ENCODE measurements at regions of chr18 and their contacts with region 1.

Region 1: DNA sequence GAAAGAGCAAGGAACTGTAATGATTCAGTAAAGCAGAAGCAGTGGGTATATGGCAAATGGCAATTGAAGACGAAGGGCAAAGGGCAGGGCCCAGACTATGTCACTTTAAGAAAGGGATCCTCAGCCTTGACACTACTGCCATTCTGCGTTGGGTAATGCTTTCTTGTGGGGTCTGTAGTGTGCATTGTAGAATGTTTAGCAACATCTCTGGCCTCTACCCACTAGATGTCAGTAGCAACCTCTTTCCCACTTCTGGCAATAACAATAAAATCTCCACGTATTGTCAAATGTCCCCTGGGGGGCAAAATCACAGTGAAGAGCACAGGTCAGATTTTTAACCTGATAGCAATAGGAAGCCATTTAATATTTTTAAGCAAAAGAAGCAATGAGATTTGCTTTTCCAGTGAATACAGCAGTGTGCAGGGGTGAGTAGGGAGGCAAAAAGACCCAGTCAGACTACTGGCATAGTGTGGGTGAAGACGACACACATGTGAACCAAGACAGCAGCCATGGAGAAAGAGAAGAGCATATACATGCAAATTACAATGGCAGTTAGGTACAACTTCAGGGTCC is 209.5 kb downstream of the DYM start:
- DNase-seq: peak; percentile 4
- H3K4me3 Mint-ChIP-seq: no peak overlapping the region
- H3K27ac Mint-ChIP-seq: no peak overlapping the region
- H3K4me1 Mint-ChIP-seq: peaks cover 7% of the 10 kb centered on the region
- H3K27me3 Mint-ChIP-seq: no peaks in the 10 kb centered on the region
- CTCF ChIP-seq: no peak

Region 2: DNA sequence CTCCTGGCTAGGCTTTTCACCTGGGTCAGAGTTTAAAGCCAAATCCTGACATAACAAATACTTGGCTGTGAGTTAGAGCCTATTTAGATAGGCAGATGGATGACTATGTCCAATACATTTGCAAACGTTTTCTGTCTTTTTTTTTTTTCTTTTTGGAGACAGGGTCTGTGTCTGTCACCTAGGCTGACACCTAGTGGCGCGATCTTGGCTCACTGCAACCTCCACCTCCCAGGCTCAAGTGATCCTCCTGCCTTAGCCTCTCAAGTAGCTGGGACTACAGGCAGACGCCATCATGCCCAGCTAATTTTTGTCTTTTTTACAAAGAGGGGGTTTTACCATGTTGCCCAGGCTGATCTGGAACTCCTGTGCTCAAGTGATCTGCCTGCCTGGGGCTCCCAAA is 84.8 kb after region 1 on chr18:
- CTCF ChIA-PET with region 1: no interaction called
- intact Hi-C with region 1: loop called (anchors 2 kb)
- DNase-seq: peak; percentile 50
- H3K4me3 Mint-ChIP-seq: no peak overlapping the region
- H3K27ac Mint-ChIP-seq: no peak overlapping the region
- H3K4me1 Mint-ChIP-seq: peaks cover 14% of the 10 kb centered on the region
- H3K27me3 Mint-ChIP-seq: no peaks in the 10 kb centered on the region
- CTCF ChIP-seq: peak; percentile 37

Region 3: GRCh38 chr18:49412679-49413078 is 161.8 kb after region 1 on chr18:
- CTCF ChIA-PET with region 1: no interaction called
- intact Hi-C with region 1: loop called (anchors 2 kb)
- DNase-seq: no peak
- H3K4me3 Mint-ChIP-seq: no peak overlapping the region
- H3K27ac Mint-ChIP-seq: no peak overlapping the region
- H3K4me1 Mint-ChIP-seq: no peaks in the 10 kb centered on the region
- H3K27me3 Mint-ChIP-seq: no peaks in the 10 kb centered on the region
- CTCF ChIP-seq: no peak

Region 4: DNA sequence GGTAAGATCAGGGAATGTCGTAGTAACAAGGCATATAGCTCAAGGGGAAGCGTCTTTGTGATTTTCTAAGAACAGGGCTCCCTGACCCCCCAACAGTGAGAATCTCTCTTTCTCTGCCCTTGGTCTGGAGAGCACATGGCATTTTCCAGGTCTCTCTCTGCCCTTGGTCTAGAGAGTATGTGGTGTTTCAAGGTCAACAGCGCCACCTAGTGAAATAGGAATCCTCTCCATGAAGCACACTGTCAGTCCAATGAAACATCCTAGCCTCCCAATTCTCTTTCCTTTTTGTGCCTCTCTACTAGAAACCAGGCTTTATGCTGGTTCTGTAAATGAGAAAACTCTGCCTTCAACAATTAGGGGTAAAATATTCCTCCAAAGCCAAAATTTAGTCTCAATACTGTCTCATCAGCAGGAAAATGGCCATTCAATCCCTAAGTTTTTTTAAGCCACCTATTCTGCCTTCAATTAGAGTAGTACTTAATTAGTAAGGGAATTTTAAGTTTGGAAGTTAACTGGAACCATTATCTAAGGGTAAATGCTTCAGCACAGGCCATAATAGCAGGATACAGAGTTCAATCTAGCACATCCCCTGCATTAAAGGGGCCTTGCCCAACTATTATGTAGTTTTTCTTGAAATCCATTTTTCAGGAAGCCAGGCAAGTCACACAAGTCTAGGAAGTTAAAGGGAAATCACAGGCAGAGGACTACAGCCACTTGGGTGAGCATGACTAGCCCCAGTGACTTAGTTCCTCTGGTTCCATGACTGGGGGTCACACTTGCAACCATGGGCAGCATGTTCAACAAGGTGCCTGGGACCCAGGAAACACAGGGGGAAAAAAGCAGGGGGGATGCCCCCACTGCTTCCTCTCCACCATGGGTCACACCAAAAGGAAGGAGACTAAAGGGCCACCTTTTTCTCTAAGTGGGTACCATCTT is 197.2 kb after region 1 on chr18:
- CTCF ChIA-PET with region 1: no interaction called
- intact Hi-C with region 1: loop called (anchors 2 kb)
- DNase-seq: peak; percentile 59
- H3K4me3 Mint-ChIP-seq: no peak overlapping the region
- H3K27ac Mint-ChIP-seq: no peak overlapping the region
- H3K4me1 Mint-ChIP-seq: no peaks in the 10 kb centered on the region
- H3K27me3 Mint-ChIP-seq: no peaks in the 10 kb centered on the region
- CTCF ChIP-seq: peak; percentile 72